Thyroid gland (tissue), 4 donors: ENCODE measurements at regions of chr21 and their contacts with region 1.

Region 1: GRCh38 chr21:28745131-28746016 is 247.3 kb downstream of the LTN1 start:
- DNase-seq: peak; percentile 68 to 77
- H3K4me3 ChIP-seq: peak overlapping the region in 2 of 3 donors; percentile 1 to 23
- H3K27ac ChIP-seq: peak overlapping the region in 2 of 3 donors; percentile 34 to 56
- H3K4me1 ChIP-seq: peaks cover 6% of the 10 kb centered on the region in 2 donors
- H3K27me3 ChIP-seq: no peaks in the 10 kb centered on the region
- CTCF ChIP-seq: peak; percentile 77 to 100 (median 94)
- POLR2A ChIP-seq: no peak

Region 2: DNA sequence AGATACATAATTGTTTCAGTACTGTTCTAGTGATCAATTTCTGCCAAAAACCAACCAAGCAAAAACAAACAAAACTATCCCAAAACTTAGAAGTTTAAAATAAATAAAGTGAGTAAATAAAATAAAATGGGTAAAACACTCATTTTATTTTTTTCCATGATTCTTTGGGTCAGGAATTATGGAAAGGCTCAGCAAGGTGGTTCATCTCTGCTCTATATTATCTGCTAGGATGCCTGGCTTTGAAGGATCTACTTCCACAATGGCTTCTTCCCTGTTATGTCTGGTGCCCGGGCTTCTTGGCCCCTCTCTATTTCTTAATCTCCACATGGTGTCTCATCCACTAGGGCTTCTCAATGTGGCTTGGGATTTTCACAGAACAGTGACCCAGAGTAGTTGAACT is 1871.0 kb before region 1 on chr21:
- intact Hi-C with region 1: loop called (anchors 5 kb)
- DNase-seq: no peak
- H3K4me3 ChIP-seq: no peak overlapping the region
- H3K27ac ChIP-seq: no peak overlapping the region
- H3K4me1 ChIP-seq: no peaks in the 10 kb centered on the region
- H3K27me3 ChIP-seq: no peaks in the 10 kb centered on the region
- CTCF ChIP-seq: no peak
- POLR2A ChIP-seq: no peak

Region 3: DNA sequence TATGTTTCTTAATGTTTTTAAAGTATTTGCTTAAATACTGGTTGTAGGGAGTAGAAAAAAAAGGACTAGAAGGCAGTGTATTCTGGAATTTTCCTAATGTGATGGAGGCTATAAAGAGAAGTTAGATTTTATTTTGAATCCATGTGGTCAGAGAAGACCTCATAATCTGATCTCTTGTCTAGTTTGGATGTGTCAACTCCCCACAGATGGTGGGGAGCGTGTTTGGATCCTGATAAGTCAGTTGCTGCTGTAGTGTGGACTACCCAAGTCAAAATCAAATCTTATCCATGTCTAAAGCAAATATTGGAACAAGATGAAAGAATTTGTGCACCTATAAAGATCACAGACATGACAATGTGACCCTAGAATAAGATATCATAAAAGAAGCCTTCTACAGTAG is 670.7 kb before region 1 on chr21:
- intact Hi-C with region 1: loop called (anchors 10 kb)
- DNase-seq: no peak
- H3K4me3 ChIP-seq: no peak overlapping the region
- H3K27ac ChIP-seq: no peak overlapping the region
- H3K4me1 ChIP-seq: no peaks in the 10 kb centered on the region
- H3K27me3 ChIP-seq: no peaks in the 10 kb centered on the region
- CTCF ChIP-seq: no peak
- POLR2A ChIP-seq: no peak

Region 4: DNA sequence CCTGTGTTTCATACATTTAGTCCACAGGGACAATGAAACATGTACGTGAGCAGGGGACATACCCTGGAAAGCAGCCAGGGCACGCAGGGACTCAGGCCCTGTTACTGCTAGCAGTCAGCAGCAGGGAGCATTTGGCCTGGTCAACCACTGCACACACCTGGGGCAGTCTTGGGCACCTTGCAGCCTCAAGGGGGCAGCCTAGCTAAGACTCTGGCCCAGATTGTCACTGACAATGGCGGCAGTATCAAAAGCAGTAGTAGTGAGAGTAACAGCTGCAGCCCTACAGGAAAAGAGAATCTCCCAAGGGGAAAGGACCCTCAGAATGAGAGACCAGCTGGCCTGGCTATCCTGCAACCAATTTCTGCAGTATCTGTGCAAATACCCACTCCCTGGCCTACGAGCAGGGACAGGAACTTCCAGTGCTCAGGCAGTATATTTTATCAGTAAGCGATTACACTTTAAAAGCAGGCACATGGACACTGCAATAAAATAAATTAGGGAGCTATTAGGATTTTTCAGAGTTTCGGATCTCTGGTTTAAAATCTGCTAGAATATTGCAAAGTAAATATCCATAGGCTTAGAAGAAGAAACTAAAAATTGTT is 228.3 kb before region 1 on chr21:
- intact Hi-C with region 1: loop called (anchors 10 kb)
- DNase-seq: peak; percentile 68 to 76
- H3K4me3 ChIP-seq: no peak overlapping the region
- H3K27ac ChIP-seq: no peak overlapping the region
- H3K4me1 ChIP-seq: no peaks in the 10 kb centered on the region
- H3K27me3 ChIP-seq: no peaks in the 10 kb centered on the region
- CTCF ChIP-seq: peak in 4 of 6 experiments; percentile 34 to 70 (median 56)
- POLR2A ChIP-seq: no peak

Region 5: GRCh38 chr21:28687571-28687970 is 57.8 kb before region 1 on chr21:
- intact Hi-C with region 1: no loop called
- DNase-seq: no peak
- H3K4me3 ChIP-seq: no peak overlapping the region
- H3K27ac ChIP-seq: no peak overlapping the region
- H3K4me1 ChIP-seq: peaks cover 0 to 7% of the 10 kb centered on the region in 2 donors
- H3K27me3 ChIP-seq: no peaks in the 10 kb centered on the region
- CTCF ChIP-seq: no peak
- POLR2A ChIP-seq: no peak